HepG2 (cell line): ENCODE measurements at regions of chr7 and their contacts with region 1.

Region 1: DNA sequence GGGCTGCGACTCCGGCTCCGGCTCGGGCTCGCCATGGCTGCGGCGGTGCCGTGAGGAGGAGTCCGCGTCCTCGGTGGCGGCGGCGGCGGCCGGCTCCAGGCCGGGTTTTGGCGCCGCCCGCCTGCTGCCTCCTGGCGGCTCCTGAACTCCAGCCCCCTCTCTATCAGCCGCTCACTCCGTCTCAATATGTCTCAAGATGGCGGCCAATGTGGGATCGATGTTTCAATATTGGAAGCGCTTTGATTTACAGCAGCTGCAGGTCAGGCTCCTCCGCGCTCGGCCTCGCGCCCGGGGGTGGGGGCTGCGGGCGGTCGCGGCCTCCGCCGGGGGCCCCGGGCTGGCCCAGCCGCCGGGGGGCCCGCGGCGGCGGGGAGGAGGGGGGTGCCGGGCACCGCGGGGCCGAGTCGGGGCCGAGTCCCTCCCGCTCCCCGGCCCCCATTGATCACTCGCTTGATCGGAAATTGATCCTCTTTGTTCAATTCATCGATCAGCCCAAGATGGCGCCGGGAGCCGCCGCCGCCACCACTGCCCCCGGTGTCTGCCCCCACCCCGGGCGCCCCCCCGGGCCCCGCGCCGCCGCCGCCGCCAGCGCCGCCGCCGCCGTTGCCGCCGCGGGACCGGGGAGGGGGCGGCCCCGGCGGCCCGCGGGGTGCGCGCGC is 1.5 kb upstream of the CUX1 start:
- DNase-seq: peak; percentile 70
- ATAC-seq: peak; percentile 68
- H3K4me3 ChIP-seq: peak overlapping the region; percentile 55 to 73 (median 71); a peak in 4 of 6 replicates
- H3K27ac ChIP-seq: peak overlapping the region; percentile 74
- H3K4me1 ChIP-seq: peaks cover 51% of the 10 kb centered on the region
- H3K27me3 ChIP-seq: no peaks in the 10 kb centered on the region; a peak in 3 of 5 replicates
- CTCF ChIP-seq: no peak
- EP300 ChIP-seq: no peak
- POLR2A ChIP-seq: peak; percentile 41 to 49; a peak in 2 of 4 replicates
- RAD21 ChIP-seq: no peak

Region 2: GRCh38 chr7:101602484-101603241 is 213.3 kb before region 1 on chr7:
- CTCF ChIA-PET with region 1: interaction called, 4 read pairs
- POLR2A ChIA-PET with region 1: no interaction called
- in situ Hi-C with region 1: loop called (anchors 5 kb)
- intact Hi-C with region 1: loop called (anchors 5 kb)
- DNase-seq: peak; percentile 72
- ATAC-seq: peak; percentile 86
- H3K4me3 ChIP-seq: peak overlapping the region in 1 of 3 experiments; percentile 55; a peak in 1 of 6 replicates
- H3K27ac ChIP-seq: no peak overlapping the region
- H3K4me1 ChIP-seq: peaks cover 47% of the 10 kb centered on the region
- H3K27me3 ChIP-seq: peaks cover 0 to 21% of the 10 kb centered on the region in 2 experiments; a peak in 3 of 5 replicates
- CTCF ChIP-seq: peak; percentile 94
- EP300 ChIP-seq: no peak
- POLR2A ChIP-seq: no peak
- RAD21 ChIP-seq: peak; percentile 90

Region 3: DNA sequence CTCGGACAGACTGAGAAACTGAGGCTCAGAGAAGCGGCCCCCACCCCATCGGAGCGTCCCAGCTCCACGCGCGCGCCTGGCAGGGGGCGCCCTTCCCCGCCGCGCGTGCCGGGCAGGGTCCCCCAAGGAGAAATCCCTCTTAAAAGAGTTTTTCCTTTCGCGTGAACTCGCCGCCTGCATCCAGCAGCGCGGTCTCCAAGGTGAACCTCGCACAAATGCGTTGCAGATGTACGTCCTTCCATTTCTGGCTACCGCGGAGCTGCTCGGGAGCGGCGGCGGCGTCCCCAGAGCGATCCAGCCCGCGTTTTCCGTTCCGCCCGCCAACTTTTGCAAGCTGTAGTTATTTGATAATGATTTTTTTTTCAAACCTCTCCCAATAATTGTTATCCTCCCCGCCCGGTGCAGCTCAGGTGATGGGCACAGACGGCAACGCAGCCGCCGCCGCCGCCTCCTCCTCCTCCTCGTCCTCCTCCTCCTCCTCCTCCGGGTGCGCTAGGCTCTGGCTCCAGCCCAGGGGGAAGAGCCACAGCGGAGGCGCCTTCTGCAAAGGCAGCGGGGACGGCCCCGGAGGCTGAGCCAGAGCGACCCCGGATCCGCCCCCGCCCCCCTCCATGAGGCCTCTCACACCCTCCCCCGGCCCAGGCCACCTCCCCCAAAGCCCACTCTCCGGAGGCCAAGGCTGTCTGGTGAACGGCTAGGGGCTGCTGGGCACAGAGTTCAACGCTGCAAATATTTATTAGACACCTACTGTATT is 72.5 kb before region 1 on chr7:
- CTCF ChIA-PET with region 1: interaction called, 4 read pairs
- POLR2A ChIA-PET with region 1: no interaction called
- in situ Hi-C with region 1: loop called (anchors 5 kb)
- intact Hi-C with region 1: no loop called
- DNase-seq: no peak
- ATAC-seq: peak; percentile 69
- H3K4me3 ChIP-seq: peak overlapping the region; percentile 30 to 65 (median 36); a peak in 4 of 6 replicates
- H3K27ac ChIP-seq: no peak overlapping the region
- H3K4me1 ChIP-seq: peaks cover 19% of the 10 kb centered on the region
- H3K27me3 ChIP-seq: peaks cover 5 to 39% of the 10 kb centered on the region in 2 experiments; a peak in 4 of 5 replicates
- CTCF ChIP-seq: peak; percentile 61
- EP300 ChIP-seq: no peak
- POLR2A ChIP-seq: no peak
- RAD21 ChIP-seq: 0 out of 2 replicates have a peak, but pooled peaks have one; percentile 24

Region 4: GRCh38 chr7:101882595-101883564 is 66.9 kb after region 1 on chr7:
- CTCF ChIA-PET with region 1: no interaction called
- POLR2A ChIA-PET with region 1: interaction called, 5 read pairs
- in situ Hi-C with region 1: no loop called
- intact Hi-C with region 1: loop called (anchors 2 kb)
- DNase-seq: peak; percentile 99
- ATAC-seq: peak; percentile 97
- H3K4me3 ChIP-seq: peak overlapping the region; percentile 34 to 64 (median 36); a peak in 5 of 6 replicates
- H3K27ac ChIP-seq: peak overlapping the region; percentile 96
- H3K4me1 ChIP-seq: peaks cover 66% of the 10 kb centered on the region
- H3K27me3 ChIP-seq: no peaks in the 10 kb centered on the region
- CTCF ChIP-seq: peak; percentile 67
- EP300 ChIP-seq: peak; percentile 63 to 66; a peak in 2 of 4 replicates
- POLR2A ChIP-seq: peak; percentile 37 to 70; a peak in 3 of 4 replicates
- RAD21 ChIP-seq: peak; percentile 49

Region 5: DNA sequence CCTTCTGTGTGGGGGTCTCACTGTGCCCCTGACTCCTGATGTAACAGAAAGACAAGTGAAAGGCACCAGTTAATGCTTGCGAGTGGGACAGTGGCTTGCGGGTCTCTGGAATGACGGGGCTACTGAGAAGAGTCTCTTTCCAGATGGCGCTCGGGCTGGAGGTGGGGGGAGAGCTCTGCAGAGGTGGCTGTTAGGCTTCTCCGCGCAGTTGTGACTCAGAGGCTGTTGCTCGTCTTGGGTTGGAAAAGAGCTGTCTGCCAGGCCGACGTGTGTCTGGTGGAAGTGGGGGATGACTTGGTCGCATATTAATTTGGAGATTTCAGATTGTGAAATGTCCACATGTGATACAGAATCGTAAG is 442.8 kb after region 1 on chr7:
- CTCF ChIA-PET with region 1: no interaction called
- POLR2A ChIA-PET with region 1: no interaction called
- in situ Hi-C with region 1: loop called (anchors 10 kb)
- intact Hi-C with region 1: no loop called
- DNase-seq: no peak
- ATAC-seq: no peak
- H3K4me3 ChIP-seq: peak overlapping the region in 1 of 3 experiments; percentile 24; a peak in 1 of 6 replicates
- H3K27ac ChIP-seq: peak overlapping the region; percentile 88
- H3K4me1 ChIP-seq: peaks cover 63% of the 10 kb centered on the region
- H3K27me3 ChIP-seq: no peaks in the 10 kb centered on the region
- CTCF ChIP-seq: no peak
- EP300 ChIP-seq: no peak
- POLR2A ChIP-seq: no peak
- RAD21 ChIP-seq: no peak